Vagina (tissue), 2 donors: ENCODE measurements at regions of chr2 and their contacts with region 1.

Region 1: GRCh38 chr2:127324635-127325034 is 30.7 kb upstream of the ERCC3 start:
- DNase-seq: no peak
- H3K4me3 ChIP-seq: no peak overlapping the region
- H3K27ac ChIP-seq: no peak overlapping the region
- H3K4me1 ChIP-seq: no peaks in the 10 kb centered on the region
- H3K27me3 ChIP-seq: no peaks in the 10 kb centered on the region
- CTCF ChIP-seq: peak; percentile 20 to 56 (median 28)
- POLR2A ChIP-seq: no peak

Region 2: DNA sequence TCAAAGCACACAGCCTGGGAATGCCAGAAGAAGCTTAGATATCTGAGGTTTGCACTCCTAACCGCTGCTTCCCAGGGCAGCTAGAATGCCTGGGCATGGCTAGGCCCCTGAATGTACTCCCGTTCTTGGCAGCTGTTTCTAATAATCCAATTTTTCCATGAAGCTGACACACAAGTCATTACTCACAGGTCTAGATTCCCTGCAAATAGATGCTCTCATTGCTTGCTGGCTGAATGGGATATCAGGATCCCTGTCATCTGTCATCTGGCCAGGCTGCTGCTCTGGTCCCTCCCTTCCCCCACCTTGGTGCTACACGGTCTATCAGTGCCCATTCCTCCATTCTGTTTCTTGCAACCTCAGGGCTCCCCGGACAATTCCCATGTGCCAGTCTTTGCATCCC is 466.6 kb before region 1 on chr2:
- intact Hi-C with region 1: no loop called
- DNase-seq: no peak
- H3K4me3 ChIP-seq: no peak overlapping the region
- H3K27ac ChIP-seq: no peak overlapping the region
- H3K4me1 ChIP-seq: no peaks in the 10 kb centered on the region
- H3K27me3 ChIP-seq: no peaks in the 10 kb centered on the region
- CTCF ChIP-seq: no peak
- POLR2A ChIP-seq: no peak

Region 3: DNA sequence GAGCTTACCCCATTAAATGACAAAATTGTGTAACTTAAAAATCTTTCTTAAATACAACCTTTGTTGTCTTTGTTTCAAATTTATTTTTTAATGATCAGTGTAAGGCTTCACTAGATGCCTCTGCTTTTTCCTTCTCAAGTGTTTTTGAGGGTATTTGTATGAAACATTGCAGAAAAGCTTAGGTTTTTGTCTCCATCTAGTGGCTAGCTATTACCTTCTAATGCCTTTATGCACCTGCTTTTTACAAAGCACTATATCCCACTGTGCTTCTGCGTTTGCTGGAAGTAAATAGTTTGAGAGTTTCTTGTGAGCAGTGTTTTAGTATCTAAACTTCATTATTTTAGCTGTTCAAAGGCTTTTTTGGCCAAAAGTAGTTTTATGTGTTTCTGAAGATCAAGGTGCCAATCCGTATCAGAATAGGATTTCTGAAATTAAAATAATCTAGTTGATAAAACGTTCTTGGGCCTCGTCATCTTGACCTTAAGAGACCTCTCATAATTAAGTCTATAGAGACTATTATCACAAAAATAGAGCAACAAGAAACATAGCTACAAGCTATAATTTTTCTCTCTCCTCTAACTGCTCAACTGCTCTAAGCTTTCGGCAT is 154.7 kb after region 1 on chr2:
- intact Hi-C with region 1: loop called (anchors 5 kb)
- DNase-seq: no peak
- H3K4me3 ChIP-seq: no peak overlapping the region
- H3K27ac ChIP-seq: no peak overlapping the region
- H3K4me1 ChIP-seq: no peaks in the 10 kb centered on the region
- H3K27me3 ChIP-seq: no peaks in the 10 kb centered on the region
- CTCF ChIP-seq: peak; percentile 42 to 57 (median 44)
- POLR2A ChIP-seq: no peak